GM12878 (cell line): ENCODE measurements at regions of chr16 and their contacts with region 1.

Region 1: DNA sequence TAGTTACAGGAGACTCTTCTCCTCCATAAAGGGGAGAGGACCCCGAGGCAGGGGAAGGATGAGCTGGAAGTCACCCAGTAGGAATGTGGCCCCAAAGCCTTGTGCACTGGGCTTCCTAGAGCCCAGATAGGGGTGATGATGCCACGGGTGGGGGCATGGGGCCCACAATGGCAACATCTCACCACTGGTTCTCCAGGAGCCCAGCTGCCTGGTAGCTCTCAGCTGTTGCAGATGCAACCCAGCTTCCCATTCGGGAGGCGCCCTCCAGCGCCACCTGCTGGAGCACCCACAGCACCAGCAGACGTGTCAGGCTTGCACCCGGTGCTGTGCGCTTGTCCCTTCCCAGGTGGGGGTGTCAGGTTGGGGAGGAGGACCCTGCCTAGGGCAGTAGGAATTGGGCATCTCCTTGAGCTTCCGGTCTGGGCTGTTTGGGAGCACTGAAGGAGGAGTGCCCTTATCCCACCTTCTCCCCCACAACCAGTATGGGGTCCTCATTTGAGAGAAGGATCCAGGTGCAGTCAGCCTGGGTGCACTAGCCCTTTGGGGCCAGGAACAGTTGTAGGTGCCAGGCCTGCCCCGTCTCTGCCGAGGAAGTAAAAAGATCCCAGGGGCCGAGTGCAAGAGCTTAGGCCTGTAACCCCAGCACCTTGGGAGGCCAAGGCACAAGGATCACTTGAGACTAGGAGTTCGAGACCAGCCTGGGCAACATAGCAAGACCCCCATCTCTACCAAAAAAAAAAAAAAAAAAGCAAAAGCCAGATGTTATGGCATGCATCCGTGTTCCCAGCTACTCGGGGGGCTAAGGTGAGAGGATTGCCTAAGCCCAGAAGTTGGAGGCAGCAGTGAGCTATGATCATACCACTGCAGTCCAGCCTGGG is 14.4 kb downstream of the CDIPT start:
- DNase-seq: no peak
- ATAC-seq: peak; percentile 99
- H3K4me3 ChIP-seq: no peak overlapping the region
- H3K27ac ChIP-seq: no peak overlapping the region
- H3K4me1 ChIP-seq: no peaks in the 10 kb centered on the region
- H3K27me3 ChIP-seq: no peaks in the 10 kb centered on the region
- CTCF ChIP-seq: peak; percentile 88 to 98 (median 90)
- EP300 ChIP-seq: no peak
- POLR2A ChIP-seq: peak; percentile 51
- RAD21 ChIP-seq: peak; percentile 76

Region 2: GRCh38 chr16:29694384-29695195 is 154.1 kb before region 1 on chr16:
- CTCF ChIA-PET with region 1: interaction called, 23 read pairs
- POLR2A ChIA-PET with region 1: no interaction called
- RAD21 ChIA-PET with region 1: interaction called, 9 read pairs
- SMC1A ChIA-PET with region 1: interaction called, 11 read pairs
- in situ Hi-C with region 1: no loop called
- intact Hi-C with region 1: no loop called
- DNase-seq: no peak
- ATAC-seq: peak; percentile 44
- H3K4me3 ChIP-seq: no peak overlapping the region
- H3K27ac ChIP-seq: no peak overlapping the region
- H3K4me1 ChIP-seq: peaks cover 7% of the 10 kb centered on the region
- H3K27me3 ChIP-seq: no peaks in the 10 kb centered on the region
- CTCF ChIP-seq: no peak
- EP300 ChIP-seq: no peak
- POLR2A ChIP-seq: no peak
- RAD21 ChIP-seq: no peak

Region 3: DNA sequence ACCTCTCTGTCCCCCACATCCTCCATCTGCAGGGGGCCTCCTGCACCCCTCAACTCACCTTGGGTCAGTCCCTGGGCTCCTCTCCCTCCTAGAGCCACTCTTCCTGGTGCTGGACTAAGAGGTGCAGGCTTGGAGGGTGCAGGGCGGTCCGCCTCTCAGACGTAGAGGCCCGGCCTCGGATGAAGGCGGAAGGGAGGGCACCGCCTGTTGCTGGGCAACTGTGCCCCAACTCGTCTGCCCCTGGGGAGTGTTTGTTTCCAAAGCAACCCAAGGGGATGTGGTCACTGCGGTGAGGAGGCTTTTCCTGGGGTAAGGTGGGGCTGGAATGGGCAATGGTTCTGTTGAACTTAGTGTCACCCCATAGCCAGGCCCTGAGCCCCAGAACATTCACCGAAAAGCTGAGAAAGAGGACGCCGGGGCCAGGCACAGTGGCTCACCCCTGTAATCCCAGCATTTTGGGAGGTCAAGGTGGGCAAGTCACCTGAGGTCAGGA is 102.8 kb before region 1 on chr16 and contains the start of gene C16orf54:
- CTCF ChIA-PET with region 1: no interaction called
- POLR2A ChIA-PET with region 1: no interaction called
- RAD21 ChIA-PET with region 1: no interaction called
- SMC1A ChIA-PET with region 1: no interaction called
- in situ Hi-C with region 1: no loop called
- intact Hi-C with region 1: no loop called
- DNase-seq: peak; percentile 89
- ATAC-seq: peak; percentile 95
- H3K4me3 ChIP-seq: peak within 1 kb of the TSS; percentile 62
- H3K27ac ChIP-seq: peak within 1 kb of the TSS; percentile 90
- H3K4me1 ChIP-seq: peaks cover 39% of the 10 kb centered on the region
- H3K27me3 ChIP-seq: no peaks in the 10 kb centered on the region
- CTCF ChIP-seq: no peak
- EP300 ChIP-seq: peak; percentile 59 to 87; a peak in 1 of 4 replicates
- POLR2A ChIP-seq: peak; percentile 71; the same call in 1 of the 2 replicates
- RAD21 ChIP-seq: no peak
- polyA plus RNA-seq, gene C16orf54: 2.1 to 2.4 TPM

Region 4: GRCh38 chr16:29757950-29758466 is 90.7 kb before region 1 on chr16:
- CTCF ChIA-PET with region 1: no interaction called
- POLR2A ChIA-PET with region 1: no interaction called
- RAD21 ChIA-PET with region 1: no interaction called
- SMC1A ChIA-PET with region 1: no interaction called
- in situ Hi-C with region 1: no loop called
- intact Hi-C with region 1: no loop called
- DNase-seq: no peak
- ATAC-seq: no peak
- H3K4me3 ChIP-seq: no peak overlapping the region
- H3K27ac ChIP-seq: no peak overlapping the region
- H3K4me1 ChIP-seq: peaks cover 17% of the 10 kb centered on the region
- H3K27me3 ChIP-seq: no peaks in the 10 kb centered on the region
- CTCF ChIP-seq: no peak
- EP300 ChIP-seq: no peak
- POLR2A ChIP-seq: no peak
- RAD21 ChIP-seq: no peak

Region 5: DNA sequence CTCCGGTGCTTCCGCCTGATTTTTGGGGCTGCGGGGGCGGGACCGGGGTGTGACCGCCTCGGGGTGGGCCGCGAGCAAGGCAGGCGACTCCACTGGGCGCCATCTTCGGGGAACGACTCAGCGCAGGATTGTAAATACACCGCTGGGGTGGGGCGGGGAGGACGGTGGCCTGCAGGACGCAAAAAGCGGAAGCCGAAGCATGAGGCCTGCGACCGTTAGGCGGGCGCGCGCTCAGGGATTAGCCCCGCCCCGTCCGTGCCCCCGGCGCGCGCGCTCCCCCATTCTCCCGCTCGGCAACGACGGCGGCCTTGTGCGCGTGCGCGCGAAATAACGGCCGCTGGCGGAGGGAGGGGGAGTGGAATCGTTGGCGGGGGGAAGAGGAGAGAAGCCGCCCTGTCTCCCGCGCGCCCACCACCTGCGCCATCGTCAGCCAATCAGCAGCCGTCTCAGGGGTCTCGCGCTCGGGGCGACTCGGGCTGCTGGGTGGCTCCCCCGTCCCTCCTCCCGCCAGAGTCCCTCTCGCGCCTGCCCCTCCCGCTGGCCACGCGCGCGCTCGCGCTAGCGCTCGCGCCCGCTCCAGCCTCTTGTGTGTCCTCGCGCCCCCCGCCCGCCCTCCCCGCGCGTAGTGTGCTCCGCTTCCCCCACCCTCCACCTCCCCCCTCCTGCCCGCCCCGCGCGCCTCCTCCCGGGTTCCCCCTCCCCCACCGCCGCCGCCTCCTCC is 43.1 kb before region 1 on chr16:
- CTCF ChIA-PET with region 1: interaction called, 31 read pairs
- POLR2A ChIA-PET with region 1: interaction called, 8 read pairs
- RAD21 ChIA-PET with region 1: interaction called, 31 read pairs
- SMC1A ChIA-PET with region 1: interaction called, 17 read pairs
- in situ Hi-C with region 1: no loop called
- intact Hi-C with region 1: no loop called
- DNase-seq: peak; percentile 76
- ATAC-seq: peak; percentile 78
- H3K4me3 ChIP-seq: peak overlapping the region; percentile 73
- H3K27ac ChIP-seq: peak overlapping the region; percentile 91
- H3K4me1 ChIP-seq: peaks cover 23% of the 10 kb centered on the region
- H3K27me3 ChIP-seq: no peaks in the 10 kb centered on the region
- CTCF ChIP-seq: 0 out of 6 replicates have a peak, but pooled peaks of 1 of the 3 experiments have one; percentile 0
- EP300 ChIP-seq: peak; percentile 46 to 79; a peak in 2 of 4 replicates
- POLR2A ChIP-seq: peak; percentile 95
- RAD21 ChIP-seq: no peak

Region 6: GRCh38 chr16:29825145-29826044 is 23.3 kb before region 1 on chr16:
- CTCF ChIA-PET with region 1: interaction called, 99 read pairs
- POLR2A ChIA-PET with region 1: interaction called, 14 read pairs
- RAD21 ChIA-PET with region 1: interaction called, 51 read pairs
- SMC1A ChIA-PET with region 1: interaction called, 48 read pairs
- in situ Hi-C with region 1: no loop called
- intact Hi-C with region 1: no loop called
- DNase-seq: no peak
- ATAC-seq: peak; percentile 56
- H3K4me3 ChIP-seq: no peak overlapping the region
- H3K27ac ChIP-seq: peak overlapping the region; percentile 16
- H3K4me1 ChIP-seq: peaks cover 11% of the 10 kb centered on the region
- H3K27me3 ChIP-seq: no peaks in the 10 kb centered on the region
- CTCF ChIP-seq: no peak
- EP300 ChIP-seq: no peak
- POLR2A ChIP-seq: peak; percentile 44; the same call in 1 of the 2 replicates
- RAD21 ChIP-seq: no peak

Region 7: DNA sequence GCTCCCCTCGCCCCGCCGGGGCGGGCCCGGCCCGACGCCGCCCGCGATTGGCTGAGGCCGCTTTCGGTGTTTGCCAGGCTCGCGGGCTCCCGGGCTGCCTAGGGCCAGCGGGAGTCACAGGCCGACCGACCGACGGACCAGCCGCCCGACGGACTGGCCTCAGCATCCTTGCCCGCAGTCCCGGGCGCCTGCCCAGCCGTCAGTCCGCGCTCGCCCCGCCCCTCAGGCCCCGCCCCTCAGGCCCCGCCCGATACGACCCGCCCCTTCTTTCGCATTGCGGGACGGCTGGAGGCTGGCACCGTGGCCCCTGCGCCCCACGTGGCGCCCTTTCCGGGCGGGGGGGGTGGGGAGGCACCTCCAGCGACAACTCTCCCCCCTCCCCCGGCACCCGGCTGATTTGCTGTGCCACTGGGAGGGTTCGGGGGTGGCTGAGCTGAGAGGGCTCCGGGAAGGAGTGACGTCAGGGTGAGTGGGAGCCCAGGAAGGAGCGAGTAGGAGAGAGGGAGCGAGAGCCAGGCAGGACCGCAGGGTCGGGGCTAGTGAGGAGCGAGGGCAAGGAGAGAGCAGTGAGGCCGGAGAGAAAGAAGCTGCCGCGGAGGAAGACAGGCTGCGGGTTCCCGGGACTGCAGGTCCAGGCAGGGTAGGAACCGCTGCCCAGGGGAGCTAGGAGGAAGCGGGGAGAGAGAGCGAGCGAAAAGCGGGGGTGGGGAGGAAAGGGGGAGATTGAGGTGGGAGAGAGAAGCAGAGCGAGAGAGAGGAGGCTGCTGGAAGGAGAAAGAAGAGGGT is 51.6 kb after region 1 on chr16 and contains the start of gene ASPHD1:
- CTCF ChIA-PET with region 1: no interaction called
- POLR2A ChIA-PET with region 1: no interaction called
- RAD21 ChIA-PET with region 1: no interaction called
- SMC1A ChIA-PET with region 1: no interaction called
- in situ Hi-C with region 1: no loop called
- intact Hi-C with region 1: no loop called
- DNase-seq: no peak
- ATAC-seq: peak; percentile 91
- H3K4me3 ChIP-seq: peak within 1 kb of the TSS; percentile 83
- H3K27ac ChIP-seq: no peak within 1 kb of the TSS
- H3K4me1 ChIP-seq: peaks cover 3% of the 10 kb centered on the region; the same call in 1 of the 2 replicates
- H3K27me3 ChIP-seq: no peaks in the 10 kb centered on the region; a peak in 1 of 4 replicates
- CTCF ChIP-seq: no peak
- EP300 ChIP-seq: no peak
- POLR2A ChIP-seq: no peak
- RAD21 ChIP-seq: no peak
- polyA plus RNA-seq, gene ASPHD1: not detected